ENCODE measurements at regions of chr12 and their contacts with region 1.

Region 1: DNA sequence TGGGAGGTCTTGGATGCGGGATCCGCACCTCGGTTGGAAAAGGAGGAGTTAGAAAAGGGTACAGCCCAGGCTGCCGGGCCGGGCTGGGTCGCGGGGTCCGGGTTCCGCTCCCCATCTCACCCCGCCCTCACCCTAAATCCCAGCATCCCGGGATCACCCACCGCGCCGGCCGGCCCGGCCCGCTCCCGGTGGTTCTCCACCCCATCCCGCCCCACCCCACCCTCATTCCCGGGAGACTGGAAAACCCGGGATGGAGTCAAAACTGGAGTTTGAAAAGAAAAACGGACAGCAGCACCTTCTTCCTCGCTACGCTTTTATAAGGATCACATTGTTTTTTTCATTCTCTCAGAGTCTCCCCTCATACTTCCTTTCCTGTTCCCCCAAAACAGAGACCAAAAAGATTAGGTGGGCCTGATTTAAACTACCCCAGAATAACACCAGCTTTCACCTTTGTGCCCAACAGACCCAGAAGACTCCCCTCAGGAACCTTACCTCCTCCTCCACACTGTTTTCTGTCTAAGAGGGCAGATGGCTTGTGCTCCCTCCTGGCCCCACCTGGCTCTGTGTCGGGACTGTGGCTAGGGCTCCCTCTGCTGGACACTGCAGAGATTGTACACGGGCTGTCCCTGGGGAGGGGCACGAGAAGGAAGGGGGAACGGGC is 2.8 kb downstream of the GLI1 start:
- DNase-seq: peak; percentile 96 to 98
- ATAC-seq: peak; percentile 54 to 77
- H3K4me3 ChIP-seq: peak overlapping the region; percentile 65
- H3K27ac ChIP-seq: peak overlapping the region; percentile 92 to 99
- H3K4me1 ChIP-seq: peaks cover 20% of the 10 kb centered on the region
- CTCF ChIP-seq: peak; percentile 96
- EP300 ChIP-seq: peak in 1 of 2 experiments; percentile 21; a peak in 2 of 5 replicates
- POLR2A ChIP-seq: no peak; the same call in 1 of the 2 replicates
- RAD21 ChIP-seq: peak; percentile 84 to 91

Region 2: GRCh38 chr12:57213058-57213715 is 249.2 kb before region 1 on chr12:
- CTCF ChIA-PET with region 1: interaction called, 11 read pairs
- POLR2A ChIA-PET with region 1: no interaction called
- DNase-seq: peak; percentile 89 to 94
- ATAC-seq: peak; percentile 51 to 75
- H3K4me3 ChIP-seq: no peak overlapping the region
- H3K27ac ChIP-seq: peak overlapping the region in 1 of 2 experiments; percentile 67; a peak in 4 of 6 replicates
- H3K4me1 ChIP-seq: peaks cover 31% of the 10 kb centered on the region
- CTCF ChIP-seq: peak; percentile 90
- EP300 ChIP-seq: no peak
- POLR2A ChIP-seq: no peak
- RAD21 ChIP-seq: peak; percentile 78 to 85

Region 3: GRCh38 chr12:57272337-57273151 is 189.8 kb before region 1 on chr12:
- CTCF ChIA-PET with region 1: interaction called, 316 read pairs
- POLR2A ChIA-PET with region 1: no interaction called
- DNase-seq: no peak
- ATAC-seq: no peak
- H3K4me3 ChIP-seq: no peak overlapping the region
- H3K27ac ChIP-seq: no peak overlapping the region
- H3K4me1 ChIP-seq: no peaks in the 10 kb centered on the region
- CTCF ChIP-seq: no peak
- EP300 ChIP-seq: no peak
- POLR2A ChIP-seq: no peak
- RAD21 ChIP-seq: no peak

Region 4: DNA sequence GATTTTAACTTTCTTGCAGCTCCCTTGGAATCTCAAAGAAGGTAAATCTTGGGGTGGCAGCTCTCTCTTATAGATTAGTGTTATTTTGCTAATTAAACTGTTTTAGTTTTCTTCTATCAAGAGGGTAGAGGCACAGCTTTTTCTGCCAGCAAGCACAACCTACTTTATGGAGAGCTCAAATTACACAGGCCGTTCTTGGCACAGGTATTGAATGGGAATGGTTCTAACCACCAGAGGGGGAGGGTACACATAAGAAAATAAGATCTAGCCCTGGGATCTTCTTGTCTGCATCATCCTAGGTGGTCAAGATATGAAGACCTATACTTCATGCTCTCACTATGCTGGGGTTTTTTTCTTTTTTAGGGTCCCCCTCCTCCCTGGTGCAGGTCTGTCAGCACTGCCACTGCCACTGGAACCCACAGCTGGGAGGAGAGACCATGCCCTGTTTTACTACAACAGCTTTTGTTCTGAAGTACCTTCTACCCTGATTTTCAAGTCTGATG is 162.8 kb before region 1 on chr12:
- CTCF ChIA-PET with region 1: interaction called, 17 read pairs
- POLR2A ChIA-PET with region 1: no interaction called
- DNase-seq: no peak
- ATAC-seq: no peak
- H3K4me3 ChIP-seq: no peak overlapping the region
- H3K27ac ChIP-seq: no peak overlapping the region
- H3K4me1 ChIP-seq: no peaks in the 10 kb centered on the region
- CTCF ChIP-seq: no peak
- EP300 ChIP-seq: no peak
- POLR2A ChIP-seq: no peak
- RAD21 ChIP-seq: no peak

Region 5: DNA sequence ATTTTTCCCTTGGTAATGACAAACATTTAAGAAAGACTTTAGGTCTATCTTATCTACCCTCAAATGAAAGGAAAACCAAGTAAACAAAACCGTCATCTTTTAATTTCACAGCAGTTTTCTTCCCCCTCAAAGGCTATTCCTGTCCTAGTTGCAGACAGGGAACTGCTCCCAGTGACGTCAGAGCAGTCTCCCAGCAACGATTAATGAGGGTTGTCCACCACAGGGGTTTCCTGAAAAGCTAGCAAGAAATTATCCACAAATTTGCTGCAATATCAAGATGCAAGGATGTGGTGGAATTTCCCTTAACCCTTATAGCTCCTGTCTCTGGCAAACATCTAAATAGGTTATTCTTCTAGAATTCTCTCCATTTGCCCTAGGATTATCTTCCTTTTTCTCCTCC is 122.3 kb before region 1 on chr12:
- CTCF ChIA-PET with region 1: interaction called, 11 read pairs
- POLR2A ChIA-PET with region 1: no interaction called
- DNase-seq: peak; percentile 41 to 71
- ATAC-seq: peak in 1 of 2 experiments; percentile 65; a peak in 4 of 6 replicates
- H3K4me3 ChIP-seq: no peak overlapping the region
- H3K27ac ChIP-seq: peak overlapping the region in 1 of 2 experiments; percentile 15; a peak in 1 of 6 replicates
- H3K4me1 ChIP-seq: peaks cover 34% of the 10 kb centered on the region
- CTCF ChIP-seq: no peak
- EP300 ChIP-seq: no peak
- POLR2A ChIP-seq: no peak
- RAD21 ChIP-seq: no peak

Region 6: GRCh38 chr12:57604454-57604991 is 142.1 kb after region 1 on chr12 and contains the start of gene DTX3:
- CTCF ChIA-PET with region 1: no interaction called
- POLR2A ChIA-PET with region 1: no interaction called
- DNase-seq: peak in 1 of 2 experiments; percentile 57
- ATAC-seq: peak; percentile 44 to 66; a peak in 4 of 6 replicates
- H3K4me3 ChIP-seq: peak within 1 kb of the TSS; percentile 90
- H3K27ac ChIP-seq: peak within 1 kb of the TSS; percentile 94 to 97
- H3K4me1 ChIP-seq: peaks cover 13% of the 10 kb centered on the region; the same call in 2 of the 3 replicates
- CTCF ChIP-seq: no peak
- EP300 ChIP-seq: no peak
- POLR2A ChIP-seq: no peak; the same call in 1 of the 2 replicates
- RAD21 ChIP-seq: no peak
- polyA plus RNA-seq, gene DTX3: 21.7 and 29.6 TPM in 2 replicates

Measured in A549 (cell line).